PC-9 (cell line): ENCODE measurements at regions of chr22 and their contacts with region 1.

Region 1: DNA sequence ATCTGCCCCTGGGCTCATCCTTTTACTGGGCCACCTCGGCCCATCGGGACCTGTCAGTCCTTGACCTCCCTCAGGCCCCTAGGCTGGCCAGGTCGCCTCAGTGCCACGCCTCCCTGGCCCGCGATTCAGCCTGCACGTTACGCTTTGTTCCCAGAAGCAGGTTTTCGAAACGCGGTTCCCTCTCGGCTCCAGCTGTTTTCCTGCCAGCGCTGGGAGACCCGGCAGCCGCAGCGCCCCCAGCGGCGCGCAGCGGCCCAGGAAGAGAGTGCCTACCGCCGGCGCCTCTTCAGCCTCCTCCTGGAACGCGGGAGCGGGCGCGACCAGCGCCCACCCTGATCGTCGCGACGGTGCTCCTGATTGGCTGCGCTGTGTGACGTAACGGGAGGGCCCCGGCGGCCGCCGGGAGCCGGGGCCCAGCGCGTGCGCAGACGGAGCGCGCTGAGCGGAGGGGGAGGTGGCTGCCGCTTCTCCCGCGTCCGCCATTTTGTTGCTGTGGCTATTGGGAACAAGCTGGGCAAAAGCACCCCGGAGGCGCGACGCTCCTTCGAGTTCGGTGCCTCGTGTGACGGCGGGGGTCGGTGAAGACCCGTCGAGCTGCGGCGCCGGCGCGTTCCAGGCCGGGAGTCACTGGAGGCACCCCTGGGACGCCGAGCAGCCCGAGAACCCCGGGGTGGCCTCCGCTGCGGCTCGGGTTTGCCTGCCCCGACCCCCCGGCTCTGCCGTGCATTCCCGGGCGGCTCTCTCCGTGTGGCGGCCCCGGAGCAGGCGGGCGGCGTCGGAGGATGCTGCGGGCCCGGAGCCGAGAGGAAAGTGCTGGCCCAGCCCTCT is at the start of gene CRKL:
- DNase-seq: peak; percentile 84 to 93
- H3K4me3 ChIP-seq: peak within 1 kb of the TSS; percentile 93
- H3K27ac ChIP-seq: peak within 1 kb of the TSS; percentile 69
- H3K4me1 ChIP-seq: peaks cover 19% of the 10 kb centered on the region
- H3K27me3 ChIP-seq: no peaks in the 10 kb centered on the region
- CTCF ChIP-seq: peak; percentile 77
- total RNA-seq, gene CRKL: 45.8 and 49.7 TPM in 2 replicates

Region 2: DNA sequence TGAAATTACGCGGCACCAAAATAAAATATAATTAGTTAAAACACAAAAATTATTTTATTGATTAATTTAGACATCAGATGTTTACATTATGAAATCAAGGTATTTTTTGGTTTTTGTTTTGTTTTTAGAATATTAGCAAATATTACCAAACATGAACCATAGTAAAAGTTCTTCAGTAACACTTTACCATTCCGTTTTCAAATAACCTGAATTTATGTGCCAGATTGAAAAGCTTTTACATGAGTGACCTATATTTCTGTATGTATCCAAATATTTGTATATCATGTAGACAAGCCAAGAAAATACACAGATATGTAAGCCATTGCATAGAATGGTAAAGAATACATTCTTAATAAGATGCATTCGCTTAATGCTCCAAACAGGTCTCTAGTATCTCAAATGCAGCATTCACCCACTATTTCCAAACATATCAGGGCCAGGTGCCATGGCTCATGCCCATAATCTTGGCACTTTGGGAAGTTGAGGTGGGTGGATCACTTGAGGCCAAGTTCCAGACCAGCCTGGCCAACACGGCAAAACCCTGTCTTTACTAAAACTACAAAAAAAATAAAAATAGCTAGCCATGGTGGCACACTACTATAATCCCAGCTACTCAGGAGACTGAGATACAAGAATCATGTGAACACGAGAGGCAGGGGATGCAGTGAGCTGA is 245.7 kb before region 1 on chr22:
- CTCF ChIA-PET with region 1: no interaction called
- POLR2A ChIA-PET with region 1: no interaction called
- intact Hi-C with region 1: no loop called
- DNase-seq: no peak
- H3K4me3 ChIP-seq: no peak overlapping the region
- H3K27ac ChIP-seq: no peak overlapping the region
- H3K4me1 ChIP-seq: no peaks in the 10 kb centered on the region
- H3K27me3 ChIP-seq: no peaks in the 10 kb centered on the region
- CTCF ChIP-seq: no peak

Region 3: DNA sequence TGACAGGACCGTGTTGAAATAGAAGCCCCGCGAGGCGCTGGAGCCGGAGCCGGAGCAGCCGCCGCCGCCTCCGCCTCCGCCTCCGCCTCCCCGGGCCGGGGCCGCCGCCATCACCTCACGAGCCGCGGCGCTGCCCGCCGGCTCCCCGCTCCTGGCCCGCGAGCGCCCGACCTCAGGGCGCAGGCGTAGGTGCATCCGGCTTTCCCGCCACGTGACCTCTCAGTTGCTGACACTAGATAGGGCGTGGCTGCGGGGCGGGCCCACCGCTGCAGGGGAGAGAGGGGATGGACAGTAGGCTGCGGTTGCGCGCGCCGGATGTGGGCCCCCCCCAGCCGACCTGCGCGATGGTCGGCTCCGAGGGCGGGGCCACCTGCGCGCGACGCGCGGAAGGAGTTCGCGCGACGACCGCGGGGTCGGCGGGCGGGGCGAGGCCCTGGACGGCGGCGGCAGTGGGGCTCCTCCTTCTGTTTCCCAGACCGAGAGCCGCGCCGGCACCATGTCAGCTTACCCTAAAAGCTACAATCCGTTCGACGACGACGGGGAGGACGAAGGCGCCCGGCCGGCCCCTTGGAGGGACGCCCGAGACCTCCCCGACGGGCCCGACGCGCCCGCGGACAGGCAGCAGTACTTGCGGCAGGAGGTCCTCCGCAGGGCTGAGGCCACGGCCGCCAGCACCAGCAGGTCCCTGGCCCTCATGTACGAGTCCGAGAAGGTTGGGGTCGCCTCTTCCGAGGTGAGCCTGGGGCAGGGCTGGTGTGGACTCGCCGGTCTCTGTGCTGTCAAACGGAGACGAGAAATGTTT is 58.4 kb before region 1 on chr22 and contains the starts of genes PI4KA and SNAP29:
- CTCF ChIA-PET with region 1: no interaction called
- POLR2A ChIA-PET with region 1: no interaction called
- intact Hi-C with region 1: loop called (anchors 2 kb)
- DNase-seq: peak; percentile 82 to 94
- H3K4me3 ChIP-seq: peak within 1 kb of the TSS; percentile 90
- H3K27ac ChIP-seq: no peak within 1 kb of the TSS
- H3K4me1 ChIP-seq: peaks cover 6% of the 10 kb centered on the region
- H3K27me3 ChIP-seq: no peaks in the 10 kb centered on the region
- CTCF ChIP-seq: no peak
- total RNA-seq, gene PI4KA: 24.7 and 27.9 TPM in 2 replicates
- total RNA-seq, gene SNAP29: 13.5 and 17.8 TPM in 2 replicates

Region 4: GRCh38 chr22:20904008-20904979 is 12.9 kb before region 1 on chr22:
- CTCF ChIA-PET with region 1: no interaction called
- POLR2A ChIA-PET with region 1: interaction called, 22 read pairs
- intact Hi-C with region 1: no loop called
- DNase-seq: peak; percentile 27 to 93
- H3K4me3 ChIP-seq: no peak overlapping the region
- H3K27ac ChIP-seq: peak overlapping the region; percentile 68
- H3K4me1 ChIP-seq: peaks cover 23% of the 10 kb centered on the region
- H3K27me3 ChIP-seq: no peaks in the 10 kb centered on the region
- CTCF ChIP-seq: no peak

Region 5: DNA sequence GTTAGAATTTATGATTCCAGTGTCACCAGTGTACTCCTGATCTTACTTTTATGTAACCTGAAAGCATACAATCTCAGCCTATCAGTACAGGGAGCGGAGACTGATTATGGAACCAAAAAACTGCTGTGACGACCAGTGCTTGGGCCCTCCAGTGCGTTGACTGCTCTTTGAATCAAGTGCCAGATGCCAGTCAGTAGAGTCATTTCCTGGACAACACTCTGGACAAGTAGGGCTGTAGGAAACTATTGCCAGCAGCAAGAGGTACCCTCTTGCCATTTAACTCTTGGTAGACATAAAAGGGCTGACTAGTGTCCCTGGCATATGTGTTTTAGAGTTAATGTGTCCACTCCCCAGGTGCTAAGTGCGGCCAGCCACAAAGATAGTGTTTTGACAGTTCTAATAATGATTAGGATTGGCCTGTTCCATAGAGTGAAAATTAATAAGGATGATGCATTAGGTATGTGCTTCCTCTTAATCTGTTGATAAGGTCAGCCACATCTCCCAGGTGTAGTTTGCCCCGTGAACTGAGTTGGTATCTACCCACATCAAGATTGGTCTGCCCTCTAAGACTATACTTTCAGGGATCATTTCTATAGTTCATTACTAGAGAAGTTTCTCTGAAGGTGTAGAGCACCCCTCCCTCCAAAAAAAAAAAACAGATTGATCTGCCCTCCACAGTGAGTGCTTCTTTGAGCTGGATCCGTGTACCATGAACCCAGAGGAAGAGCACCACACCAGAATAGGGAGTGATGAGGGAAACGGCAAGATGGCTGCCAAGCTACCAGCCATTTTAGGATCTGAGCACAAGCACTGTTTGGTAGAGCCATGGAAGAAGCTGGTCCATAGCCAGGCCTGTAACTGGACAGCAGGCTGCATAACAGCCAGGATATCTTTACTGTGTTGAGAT is 29.1 kb after region 1 on chr22:
- CTCF ChIA-PET with region 1: no interaction called
- POLR2A ChIA-PET with region 1: interaction called, 14 read pairs
- intact Hi-C with region 1: no loop called
- DNase-seq: peak in 1 of 2 experiments; percentile 12
- H3K4me3 ChIP-seq: no peak overlapping the region
- H3K27ac ChIP-seq: no peak overlapping the region
- H3K4me1 ChIP-seq: no peaks in the 10 kb centered on the region
- H3K27me3 ChIP-seq: no peaks in the 10 kb centered on the region
- CTCF ChIP-seq: no peak

Region 6: GRCh38 chr22:20957316-20958101 is 40.3 kb after region 1 on chr22:
- CTCF ChIA-PET with region 1: no interaction called
- POLR2A ChIA-PET with region 1: no interaction called
- intact Hi-C with region 1: loop called (anchors 5 kb)
- DNase-seq: peak; percentile 49 to 57
- H3K4me3 ChIP-seq: peak overlapping the region; percentile 84
- H3K27ac ChIP-seq: peak overlapping the region; percentile 57; the same call in 1 of the 2 replicates
- H3K4me1 ChIP-seq: peaks cover 9% of the 10 kb centered on the region; the same call in 1 of the 2 replicates
- H3K27me3 ChIP-seq: no peaks in the 10 kb centered on the region
- CTCF ChIP-seq: no peak